ENCODE measurements at regions of chr11 and their contacts with region 1.

Region 1: GRCh38 chr11:96155627-96156378 is 187.2 kb downstream of the MAML2 start:
- DNase-seq: peak; percentile 85
- ATAC-seq: peak; percentile 62
- H3K4me3 Mint-ChIP-seq: peak overlapping the region; percentile 48
- H3K27ac Mint-ChIP-seq: peak overlapping the region; percentile 98
- H3K4me1 Mint-ChIP-seq: peaks cover 60% of the 10 kb centered on the region
- H3K27me3 Mint-ChIP-seq: no peaks in the 10 kb centered on the region

Region 2: GRCh38 chr11:96054870-96055705 is 100.7 kb before region 1 on chr11:
- CTCF ChIA-PET with region 1: interaction called, 10 read pairs
- POLR2A ChIA-PET with region 1: no interaction called
- intact Hi-C with region 1: no loop called
- DNase-seq: no peak
- ATAC-seq: peak; percentile 20
- H3K4me3 Mint-ChIP-seq: no peak overlapping the region
- H3K27ac Mint-ChIP-seq: peak overlapping the region; percentile 88
- H3K4me1 Mint-ChIP-seq: peaks cover 86% of the 10 kb centered on the region
- H3K27me3 Mint-ChIP-seq: no peaks in the 10 kb centered on the region

Region 3: DNA sequence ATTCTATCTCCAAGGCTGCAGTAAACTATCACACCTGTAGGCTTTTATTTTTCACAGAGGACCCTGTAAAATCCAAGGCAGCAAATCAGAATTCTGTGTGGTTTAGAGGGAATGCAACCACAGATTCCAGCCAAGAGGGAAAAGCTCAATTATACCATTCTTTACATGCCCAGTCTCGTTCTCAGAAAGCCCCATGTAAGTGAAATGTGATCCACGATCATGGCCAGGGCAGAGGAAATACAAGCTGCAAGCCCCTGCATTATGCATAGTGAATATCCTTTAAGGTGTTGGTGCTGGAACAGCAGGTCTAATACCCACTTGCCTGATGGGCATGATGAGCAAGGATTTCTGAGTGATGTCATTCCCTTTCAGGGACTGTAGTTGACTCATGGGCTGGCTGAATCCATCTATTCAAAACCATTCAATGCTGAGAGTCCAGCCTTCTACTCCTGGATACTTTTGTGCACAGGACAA is 33.2 kb before region 1 on chr11:
- CTCF ChIA-PET with region 1: no interaction called
- POLR2A ChIA-PET with region 1: interaction called, 10 read pairs
- intact Hi-C with region 1: no loop called
- DNase-seq: no peak
- ATAC-seq: no peak
- H3K4me3 Mint-ChIP-seq: no peak overlapping the region
- H3K27ac Mint-ChIP-seq: peak overlapping the region; percentile 10
- H3K4me1 Mint-ChIP-seq: peaks cover 56% of the 10 kb centered on the region
- H3K27me3 Mint-ChIP-seq: no peaks in the 10 kb centered on the region

Region 4: GRCh38 chr11:96357794-96358193 is 202.0 kb after region 1 on chr11:
- CTCF ChIA-PET with region 1: no interaction called
- POLR2A ChIA-PET with region 1: no interaction called
- intact Hi-C with region 1: no loop called
- DNase-seq: peak; percentile 16
- ATAC-seq: peak; percentile 72
- H3K4me3 Mint-ChIP-seq: no peak overlapping the region
- H3K27ac Mint-ChIP-seq: peak overlapping the region; percentile 34
- H3K4me1 Mint-ChIP-seq: peaks cover 20% of the 10 kb centered on the region
- H3K27me3 Mint-ChIP-seq: no peaks in the 10 kb centered on the region

Measured in activated CD4-positive, alpha-beta T cell treated with anti-CD3 and anti-CD28 coated beads for 36 hours (primary cell).